Left cardiac atrium (tissue), 4 donors: ENCODE measurements at regions of chr1 and their contacts with region 1.

Region 1: DNA sequence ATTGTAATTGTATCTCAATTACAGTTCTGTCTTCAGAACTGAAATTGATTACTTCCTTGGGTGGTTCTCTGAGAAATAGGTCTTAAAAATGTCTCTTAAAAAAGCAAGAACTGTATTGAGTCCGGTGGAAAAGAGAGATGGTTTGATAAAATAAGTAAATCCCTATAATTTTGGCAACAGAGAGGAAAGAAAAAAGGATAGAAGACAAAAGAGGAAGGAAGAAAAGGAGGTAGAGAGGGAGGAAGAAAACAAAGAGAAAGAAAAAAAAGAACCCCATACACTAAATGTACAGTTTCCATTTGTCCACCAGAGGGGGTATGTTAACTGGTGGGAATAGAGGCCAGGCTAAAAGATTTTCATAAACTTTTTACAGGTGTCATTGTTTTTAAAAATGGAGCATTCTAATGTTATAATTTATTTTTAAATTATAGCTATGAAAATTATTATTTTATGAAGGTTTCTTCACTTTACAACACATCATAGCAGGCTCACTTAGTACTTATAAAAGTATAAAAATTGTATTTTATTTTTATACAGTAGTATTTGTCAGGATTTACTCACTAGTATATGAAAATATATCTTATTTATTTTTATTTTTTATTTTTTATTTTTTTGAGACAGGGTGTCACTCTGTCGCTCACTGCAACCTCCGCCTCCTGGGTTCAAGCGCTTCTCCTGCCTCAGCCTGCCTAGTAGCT is 2.1 kb upstream of the UBE2T start:
- DNase-seq: no peak
- ATAC-seq: no peak

Region 2: DNA sequence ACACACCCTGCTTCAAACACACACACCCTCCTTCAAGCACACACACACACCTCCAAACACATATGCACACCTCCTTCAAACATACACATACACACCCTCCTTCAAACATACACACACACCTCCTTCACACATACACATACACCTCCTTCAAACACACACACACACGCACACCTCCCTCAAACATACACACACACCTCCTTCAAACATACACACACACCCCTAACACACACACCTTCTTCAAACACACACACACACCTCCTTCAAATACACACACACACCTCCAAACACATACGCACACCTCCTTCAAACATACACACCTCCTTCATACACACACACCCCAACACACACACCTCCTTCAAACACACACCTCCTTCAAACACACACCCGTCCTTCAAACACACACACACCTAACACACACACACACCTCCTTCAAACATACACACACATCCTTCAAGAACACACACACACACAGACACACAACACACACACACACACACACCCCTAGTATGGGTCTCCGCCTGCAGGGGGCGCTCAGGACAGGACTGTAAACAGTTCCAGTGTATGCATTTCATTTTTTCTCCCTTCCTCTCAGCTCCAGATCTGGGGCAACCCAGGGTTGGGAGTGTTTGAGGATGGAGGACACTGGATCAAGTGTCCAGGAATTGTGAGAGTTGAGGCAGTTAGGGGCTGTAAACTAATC is 138.2 kb before region 1 on chr1:
- intact Hi-C with region 1: no loop called
- DNase-seq: no peak
- ATAC-seq: no peak

Region 3: GRCh38 chr1:202462342-202463076 is 118.7 kb after region 1 on chr1:
- intact Hi-C with region 1: loop called in 1 of 2 experiments (anchors 5 kb)
- DNase-seq: no peak
- ATAC-seq: peak; percentile 81 to 85